Heart left ventricle (tissue), 16 donors: ENCODE measurements at regions of chr11 and their contacts with region 1.

Region 1: GRCh38 chr11:57712256-57713150 is at the start of gene TMX2:
- DNase-seq: peak; percentile 92 to 96 (median 94)
- ATAC-seq: peak; percentile 97 to 98 (median 97)
- H3K4me3 ChIP-seq: peak within 1 kb of the TSS; percentile 68 to 100 (median 90)
- H3K27ac ChIP-seq: peak within 1 kb of the TSS; percentile 73 to 95 (median 91)
- H3K4me1 ChIP-seq: peaks cover 0 to 47% (median 31%) of the 10 kb centered on the region in 12 donors
- H3K27me3 ChIP-seq: no peaks in the 10 kb centered on the region
- CTCF ChIP-seq: no peak
- POLR2A ChIP-seq: no peak
- total RNA-seq, gene TMX2: 46.7 to 78.2 (median 65.8) TPM

Region 2: GRCh38 chr11:57657194-57658022 is 55.1 kb before region 1 on chr11 and contains the start of gene CLP1:
- intact Hi-C with region 1: no loop called
- DNase-seq: peak; percentile 99 to 100 (median 100)
- ATAC-seq: peak; percentile 99
- H3K4me3 ChIP-seq: peak within 1 kb of the TSS; percentile 28 to 92 (median 70)
- H3K27ac ChIP-seq: peak within 1 kb of the TSS; percentile 52 to 96 (median 87)
- H3K4me1 ChIP-seq: peaks cover 0 to 28% (median 15%) of the 10 kb centered on the region in 12 donors
- H3K27me3 ChIP-seq: no peaks in the 10 kb centered on the region
- CTCF ChIP-seq: peak in 1 of 12 donors; percentile 11
- POLR2A ChIP-seq: peak in 1 of 2 donors; percentile 80
- total RNA-seq, gene CLP1: 5.5 to 11.6 (median 8.2) TPM

Region 3: DNA sequence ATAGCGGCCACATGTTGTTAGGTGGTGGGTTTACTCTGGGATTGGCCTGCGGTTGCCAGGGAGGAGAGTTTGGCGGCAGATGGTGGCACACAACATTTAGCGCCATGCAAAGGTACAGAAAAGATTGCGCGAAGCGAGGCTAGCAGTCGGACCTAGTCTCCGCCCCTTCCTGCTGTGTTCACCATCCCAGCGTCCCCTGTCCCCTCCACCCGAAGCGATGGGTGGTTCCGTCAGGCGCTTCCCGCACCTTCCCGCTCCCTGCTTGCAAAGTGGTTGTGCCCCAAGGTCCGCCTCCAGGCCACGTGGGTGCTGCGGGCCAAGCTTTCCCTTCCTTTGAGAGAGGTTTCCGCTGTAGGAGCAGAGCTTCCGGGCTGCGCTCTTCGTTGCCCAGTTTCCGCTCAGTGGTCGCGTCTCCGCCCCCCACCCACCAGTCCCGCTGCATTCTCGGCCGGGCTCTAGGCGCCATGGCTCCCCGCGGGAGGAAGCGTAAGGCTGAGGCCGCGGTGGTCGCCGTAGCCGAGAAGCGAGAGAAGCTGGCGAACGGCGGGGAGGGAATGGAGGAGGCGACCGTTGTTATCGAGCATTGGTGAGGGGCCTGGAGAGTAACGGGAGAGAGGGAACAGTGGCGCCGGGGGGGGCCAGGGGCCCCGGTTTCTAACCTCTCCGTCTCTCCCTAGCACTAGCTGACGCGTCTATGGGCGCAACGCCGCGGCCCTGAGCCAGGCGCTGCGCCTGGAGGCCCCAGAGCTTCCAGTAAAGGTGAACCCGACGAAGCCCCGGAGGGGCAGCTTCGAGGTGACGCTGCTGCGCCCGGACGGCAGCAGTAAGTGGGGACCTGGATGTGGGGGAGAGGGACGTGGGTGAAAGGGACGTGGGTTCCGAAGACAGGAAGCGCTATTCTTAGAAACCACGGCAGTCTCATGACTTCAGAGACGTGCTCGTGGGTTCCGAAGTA is 28.9 kb after region 1 on chr11 and contains the start of gene SELENOH:
- intact Hi-C with region 1: loop called in 1 of 10 experiments (anchors 1 kb)
- DNase-seq: peak; percentile 95 to 98 (median 97)
- ATAC-seq: peak; percentile 96 to 98 (median 98)
- H3K4me3 ChIP-seq: peak within 1 kb of the TSS; percentile 78 to 99 (median 92)
- H3K27ac ChIP-seq: peak within 1 kb of the TSS; percentile 92 to 99 (median 96)
- H3K4me1 ChIP-seq: peaks cover 2 to 42% (median 14%) of the 10 kb centered on the region in 12 donors
- H3K27me3 ChIP-seq: no peaks in the 10 kb centered on the region
- CTCF ChIP-seq: peak in 1 of 12 donors; percentile 4
- POLR2A ChIP-seq: peak in 1 of 2 donors; percentile 73
- total RNA-seq, gene SELENOH: 56.8 to 134 (median 85.7) TPM